Activated CD8-positive, alpha-beta T cell treated with anti-CD3 and anti-CD28 coated beads, Interleukin-2, amount 10 ng/mL, durations not matched to agents 7 days and 5 days (primary cell): ENCODE measurements at regions of chr22 and their contacts with region 1.

Region 1: GRCh38 chr22:24951942-24952836 is at the start of gene KIAA1671:
- DNase-seq: peak; percentile 85
- ATAC-seq: peak; percentile 94
- H3K4me3 Mint-ChIP-seq: peak within 1 kb of the TSS; percentile 78
- H3K27ac Mint-ChIP-seq: no peak within 1 kb of the TSS
- H3K4me1 Mint-ChIP-seq: peaks cover 21% of the 10 kb centered on the region
- H3K27me3 Mint-ChIP-seq: peaks cover 57% of the 10 kb centered on the region
- total RNA-seq, gene KIAA1671: 5.1 to 5.5 TPM

Region 2: DNA sequence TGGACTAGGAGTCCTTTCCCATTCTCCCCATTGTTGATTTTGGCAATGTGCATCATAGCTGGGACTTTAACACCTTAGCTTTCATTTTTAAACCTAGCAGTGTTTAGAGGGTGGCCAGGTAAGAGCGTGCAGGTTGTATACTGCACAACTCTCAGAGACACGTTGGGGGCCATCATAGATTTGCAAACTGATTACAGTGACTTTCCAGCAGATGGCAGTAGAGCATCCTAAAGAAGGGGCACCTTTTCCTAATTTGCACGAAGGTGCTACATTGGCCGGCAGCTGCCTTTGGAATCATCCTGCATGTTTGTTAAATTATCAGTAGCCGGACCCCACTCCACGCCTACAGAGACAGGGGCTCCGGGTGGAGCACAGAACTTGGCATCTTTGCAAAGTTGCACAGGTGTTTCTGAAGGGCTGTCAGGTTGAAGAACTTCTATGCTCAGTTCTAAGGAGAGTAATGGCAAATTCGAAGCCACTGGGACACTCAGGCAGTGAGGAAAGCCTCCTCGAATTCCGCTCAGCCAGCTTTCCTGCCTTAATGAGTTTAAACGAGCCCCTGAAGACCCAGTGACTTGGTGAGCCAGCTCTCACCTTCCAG is 13.3 kb before region 1 on chr22:
- CTCF ChIA-PET with region 1: interaction called, 17 read pairs
- POLR2A ChIA-PET with region 1: no interaction called
- DNase-seq: peak; percentile 43
- ATAC-seq: peak; percentile 36
- H3K4me3 Mint-ChIP-seq: no peak overlapping the region
- H3K27ac Mint-ChIP-seq: no peak overlapping the region
- H3K4me1 Mint-ChIP-seq: no peaks in the 10 kb centered on the region
- H3K27me3 Mint-ChIP-seq: no peaks in the 10 kb centered on the region

Region 3: DNA sequence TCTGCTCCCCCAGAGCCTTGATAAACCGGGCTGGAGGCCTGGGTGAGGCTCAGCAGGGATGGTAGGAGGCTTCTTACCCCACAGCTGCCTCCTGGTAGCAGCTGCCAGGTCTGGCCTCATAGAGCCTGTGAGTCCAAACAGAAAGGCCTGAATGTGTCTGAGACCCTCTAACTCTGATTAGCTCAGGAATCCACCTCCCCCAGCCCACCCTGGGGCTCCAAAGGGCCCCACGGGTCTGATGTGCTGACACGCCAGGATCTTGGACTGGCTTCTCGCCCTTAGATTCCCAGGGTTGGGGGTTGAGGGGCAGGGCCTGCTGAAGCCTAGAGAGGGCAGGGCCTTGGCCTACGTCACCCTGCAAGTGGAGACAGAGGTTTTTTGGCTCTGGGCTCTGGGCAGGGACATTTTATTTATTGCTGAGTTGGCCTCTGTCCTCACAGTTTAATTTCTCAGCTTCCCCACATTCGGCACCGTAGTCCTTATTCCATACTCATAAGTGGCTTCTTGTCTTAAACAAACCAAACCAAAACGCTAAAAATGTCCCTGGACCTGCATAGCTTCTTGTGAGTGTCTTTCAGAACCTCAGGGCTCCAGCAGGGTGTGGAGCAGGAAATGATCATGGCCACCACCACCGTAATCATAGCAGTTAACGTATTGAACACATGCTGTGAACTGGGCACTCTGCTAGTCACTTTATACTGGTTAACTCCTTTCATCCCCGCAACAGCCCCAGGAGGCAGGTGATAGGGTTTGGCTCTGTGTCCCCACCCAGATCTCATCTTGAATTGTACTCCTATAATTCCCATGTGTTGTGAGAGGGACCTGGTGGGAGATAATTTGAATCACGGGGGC is 25.4 kb after region 1 on chr22:
- CTCF ChIA-PET with region 1: no interaction called
- POLR2A ChIA-PET with region 1: no interaction called
- DNase-seq: no peak
- ATAC-seq: no peak
- H3K4me3 Mint-ChIP-seq: no peak overlapping the region
- H3K27ac Mint-ChIP-seq: no peak overlapping the region
- H3K4me1 Mint-ChIP-seq: no peaks in the 10 kb centered on the region
- H3K27me3 Mint-ChIP-seq: peaks cover 9% of the 10 kb centered on the region

Region 4: GRCh38 chr22:25021976-25022711 is 70.0 kb after region 1 on chr22:
- CTCF ChIA-PET with region 1: no interaction called
- POLR2A ChIA-PET with region 1: no interaction called
- DNase-seq: no peak
- ATAC-seq: no peak
- H3K4me3 Mint-ChIP-seq: no peak overlapping the region
- H3K27ac Mint-ChIP-seq: no peak overlapping the region
- H3K4me1 Mint-ChIP-seq: peaks cover 14% of the 10 kb centered on the region
- H3K27me3 Mint-ChIP-seq: peaks cover 30% of the 10 kb centered on the region